ENCODE measurements at regions of chr9 and their contacts with region 1.

Region 1: DNA sequence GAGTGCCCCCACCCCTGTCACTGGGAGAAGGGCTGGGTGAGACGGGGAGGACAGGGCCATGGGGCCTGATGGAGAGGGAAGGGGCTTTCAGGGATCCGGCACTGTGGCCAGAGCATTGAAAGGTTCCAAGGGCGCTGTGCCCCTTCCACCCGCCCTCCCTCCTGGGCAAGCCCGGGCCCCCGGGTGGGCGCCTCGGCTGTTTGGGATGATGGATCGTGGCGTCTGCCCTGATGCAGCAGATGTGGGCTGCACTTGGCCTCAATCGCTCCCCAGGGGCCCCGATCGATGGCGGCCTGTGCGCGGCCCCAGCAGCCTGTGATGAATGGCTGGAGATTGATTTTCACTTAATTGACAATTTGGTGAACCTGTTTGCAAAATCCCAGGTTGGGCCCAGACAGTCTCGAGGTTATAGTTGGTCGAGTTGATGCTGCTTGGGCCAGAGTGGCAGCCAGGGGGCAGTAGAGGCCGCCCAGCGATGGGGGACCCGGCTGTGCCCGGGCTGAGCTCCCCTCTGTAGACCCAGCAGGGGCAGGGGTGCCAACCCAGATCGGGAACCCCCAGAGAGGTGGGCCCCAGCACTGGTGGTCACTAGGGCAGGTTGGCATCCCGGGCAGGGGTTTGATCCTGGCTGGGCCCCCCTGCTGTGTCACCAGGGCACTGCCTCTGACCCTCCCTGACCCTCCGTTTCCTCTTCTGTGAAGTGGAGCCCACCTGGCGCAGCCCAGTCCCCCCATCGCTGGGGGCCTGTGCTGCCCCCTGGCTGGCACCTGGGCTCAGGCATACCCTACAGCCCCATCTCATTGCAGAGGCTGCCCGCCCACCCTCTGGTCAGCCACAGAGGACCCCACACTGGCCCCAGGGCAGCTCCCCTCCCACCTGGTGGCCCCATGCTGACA is 34.7 kb downstream of the LHX3 start:
- DNase-seq: peak; percentile 89
- H3K4me3 ChIP-seq: peak overlapping the region in 1 of 2 experiments; percentile 48; a peak in 1 of 4 replicates
- H3K27ac ChIP-seq: no peak overlapping the region
- H3K4me1 ChIP-seq: no peaks in the 10 kb centered on the region
- H3K27me3 ChIP-seq: peaks cover 43% of the 10 kb centered on the region; the same call in 1 of the 2 replicates
- CTCF ChIP-seq: peak; percentile 77
- EP300 ChIP-seq: no peak
- RAD21 ChIP-seq: peak; percentile 74

Region 2: DNA sequence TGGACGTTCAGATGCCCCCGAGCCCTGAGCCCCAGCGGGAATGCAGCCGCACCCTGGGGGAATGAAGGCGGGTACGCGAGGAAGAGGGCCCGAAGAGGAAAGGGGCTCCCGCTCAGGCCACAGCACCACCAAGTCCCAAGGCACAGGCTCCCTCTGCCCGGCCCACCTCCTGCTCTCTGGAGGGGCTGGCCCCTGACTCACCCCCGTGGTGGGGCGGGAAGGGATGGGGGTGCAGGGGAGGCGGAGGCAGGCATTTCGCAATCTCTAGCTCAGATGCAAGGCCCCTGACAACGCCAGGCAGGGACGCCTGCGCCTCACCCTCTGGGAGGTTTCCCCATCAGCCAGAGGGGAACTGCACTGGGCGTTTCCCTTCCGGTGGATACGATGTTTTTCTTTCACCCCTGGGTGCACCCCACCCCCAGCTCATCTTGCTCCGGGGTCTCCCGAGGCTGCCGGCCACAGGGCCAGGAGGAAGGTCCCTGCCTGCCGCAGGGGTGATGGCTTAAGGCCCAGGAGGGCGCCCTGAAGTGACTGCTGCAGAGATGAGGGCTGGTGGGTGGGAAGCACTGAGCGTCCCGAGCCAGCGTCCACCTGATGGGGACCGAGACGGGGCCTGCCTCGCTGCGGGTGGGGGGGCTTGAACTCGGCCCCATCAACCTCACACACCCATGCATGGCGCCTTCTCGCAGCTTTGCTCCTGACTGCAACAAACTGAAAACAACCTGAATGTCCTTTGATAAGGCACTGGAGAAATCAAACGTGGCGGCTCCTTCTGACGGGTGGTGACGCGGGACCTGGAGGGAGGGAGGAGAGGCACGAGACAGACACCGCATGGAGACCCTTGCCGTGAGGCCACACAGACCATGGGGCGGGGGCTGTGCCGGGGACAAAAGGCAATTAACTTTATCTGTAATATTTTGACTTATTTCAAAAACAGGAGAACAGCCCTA is 124.0 kb before region 1 on chr9:
- CTCF ChIA-PET with region 1: no interaction called
- POLR2A ChIA-PET with region 1: no interaction called
- DNase-seq: no peak
- H3K4me3 ChIP-seq: no peak overlapping the region
- H3K27ac ChIP-seq: no peak overlapping the region
- H3K4me1 ChIP-seq: no peaks in the 10 kb centered on the region; a peak in 1 of 4 replicates
- H3K27me3 ChIP-seq: no peaks in the 10 kb centered on the region
- CTCF ChIP-seq: no peak
- EP300 ChIP-seq: no peak
- RAD21 ChIP-seq: no peak

Region 3: GRCh38 chr9:136185596-136186366 is 15.5 kb after region 1 on chr9:
- CTCF ChIA-PET with region 1: interaction called, 69 read pairs
- POLR2A ChIA-PET with region 1: no interaction called
- DNase-seq: no peak
- H3K4me3 ChIP-seq: no peak overlapping the region
- H3K27ac ChIP-seq: no peak overlapping the region
- H3K4me1 ChIP-seq: no peaks in the 10 kb centered on the region
- H3K27me3 ChIP-seq: peaks cover 94% of the 10 kb centered on the region
- CTCF ChIP-seq: no peak
- EP300 ChIP-seq: no peak
- RAD21 ChIP-seq: no peak

Region 4: DNA sequence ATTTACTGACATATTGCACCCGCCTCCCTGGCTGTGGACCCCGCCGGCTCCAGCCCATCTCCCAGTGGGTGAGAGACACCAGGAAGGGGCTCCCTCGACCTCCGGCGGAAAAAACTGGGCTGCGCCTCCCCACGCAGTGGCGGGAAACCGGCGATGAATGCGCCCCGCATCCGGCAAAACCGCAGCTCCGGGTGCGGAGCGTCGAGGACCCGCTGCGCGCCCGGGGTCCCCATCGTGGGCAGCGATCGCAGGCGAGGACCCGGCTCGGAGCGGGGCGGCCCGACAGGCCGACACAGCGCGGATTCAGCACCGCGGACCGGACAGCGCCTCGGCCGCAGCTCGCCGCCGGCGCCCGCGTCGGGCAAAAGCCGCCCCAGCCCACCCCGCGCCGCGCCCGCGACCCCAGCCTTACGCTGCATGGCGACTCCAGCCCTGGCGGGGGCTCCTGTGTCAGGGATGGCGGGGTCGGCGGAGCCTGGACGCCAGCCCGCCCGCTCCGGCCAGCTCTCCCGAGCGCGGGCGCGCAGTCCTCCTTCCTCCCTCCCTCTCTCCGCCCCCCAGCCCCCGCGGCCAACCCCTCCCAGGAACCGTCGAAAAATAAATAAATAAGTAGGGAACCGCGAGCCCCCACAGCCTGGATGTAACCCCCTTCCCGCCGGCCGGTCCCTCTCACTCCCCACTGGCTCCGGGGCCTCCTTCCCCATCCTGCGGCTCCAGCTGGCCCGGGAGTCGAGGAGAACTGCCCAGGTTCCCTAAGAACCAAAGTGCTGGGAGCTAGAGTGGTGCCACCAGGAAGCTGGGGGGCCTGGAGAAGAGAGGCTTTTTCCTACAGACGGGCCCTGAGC is 31.6 kb after region 1 on chr9:
- CTCF ChIA-PET with region 1: interaction called, 16 read pairs
- POLR2A ChIA-PET with region 1: no interaction called
- DNase-seq: peak; percentile 63
- H3K4me3 ChIP-seq: no peak overlapping the region
- H3K27ac ChIP-seq: no peak overlapping the region
- H3K4me1 ChIP-seq: peaks cover 0 to 5% of the 10 kb centered on the region in 2 experiments; a peak in 1 of 4 replicates
- H3K27me3 ChIP-seq: peaks cover 66% of the 10 kb centered on the region
- CTCF ChIP-seq: no peak
- EP300 ChIP-seq: no peak
- RAD21 ChIP-seq: no peak

Region 5: DNA sequence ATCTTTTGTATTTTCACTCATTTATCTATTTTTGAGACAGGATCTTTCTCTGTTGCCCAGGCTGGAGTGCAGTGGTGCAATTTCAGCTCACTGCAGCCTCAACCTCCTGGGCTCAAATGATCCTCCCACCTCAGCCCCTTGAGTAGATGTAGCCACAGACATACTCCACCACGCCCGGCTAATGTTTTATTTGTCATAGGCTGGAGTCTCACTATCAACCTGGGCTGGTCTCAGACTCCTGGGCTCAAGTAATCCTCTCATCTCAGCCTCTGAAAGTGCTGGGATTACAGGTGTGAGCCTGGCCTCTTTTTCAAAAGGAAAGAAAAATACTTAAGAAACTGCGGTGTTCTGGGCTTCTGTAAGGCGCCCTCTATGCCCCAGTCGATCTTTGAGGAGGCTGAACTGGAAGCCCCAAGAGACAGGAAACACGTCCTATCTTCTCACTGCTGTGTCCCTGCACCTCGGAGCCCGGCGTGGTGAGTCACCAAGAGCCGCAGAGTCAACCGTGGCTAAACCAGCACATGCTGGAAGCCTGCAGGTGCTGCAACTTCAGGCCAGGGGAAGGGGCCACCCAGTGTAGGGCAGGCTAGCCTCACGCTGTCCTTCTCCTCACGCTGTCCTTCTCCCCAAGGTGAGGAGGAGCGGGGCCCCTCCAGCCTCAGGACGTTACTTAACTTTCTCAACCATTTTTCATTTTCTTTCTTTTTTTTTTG is 49.9 kb after region 1 on chr9:
- CTCF ChIA-PET with region 1: interaction called, 15 read pairs
- POLR2A ChIA-PET with region 1: no interaction called
- DNase-seq: no peak
- H3K4me3 ChIP-seq: no peak overlapping the region
- H3K27ac ChIP-seq: no peak overlapping the region
- H3K4me1 ChIP-seq: no peaks in the 10 kb centered on the region
- H3K27me3 ChIP-seq: no peaks in the 10 kb centered on the region
- CTCF ChIP-seq: no peak
- EP300 ChIP-seq: no peak
- RAD21 ChIP-seq: no peak

Region 6: DNA sequence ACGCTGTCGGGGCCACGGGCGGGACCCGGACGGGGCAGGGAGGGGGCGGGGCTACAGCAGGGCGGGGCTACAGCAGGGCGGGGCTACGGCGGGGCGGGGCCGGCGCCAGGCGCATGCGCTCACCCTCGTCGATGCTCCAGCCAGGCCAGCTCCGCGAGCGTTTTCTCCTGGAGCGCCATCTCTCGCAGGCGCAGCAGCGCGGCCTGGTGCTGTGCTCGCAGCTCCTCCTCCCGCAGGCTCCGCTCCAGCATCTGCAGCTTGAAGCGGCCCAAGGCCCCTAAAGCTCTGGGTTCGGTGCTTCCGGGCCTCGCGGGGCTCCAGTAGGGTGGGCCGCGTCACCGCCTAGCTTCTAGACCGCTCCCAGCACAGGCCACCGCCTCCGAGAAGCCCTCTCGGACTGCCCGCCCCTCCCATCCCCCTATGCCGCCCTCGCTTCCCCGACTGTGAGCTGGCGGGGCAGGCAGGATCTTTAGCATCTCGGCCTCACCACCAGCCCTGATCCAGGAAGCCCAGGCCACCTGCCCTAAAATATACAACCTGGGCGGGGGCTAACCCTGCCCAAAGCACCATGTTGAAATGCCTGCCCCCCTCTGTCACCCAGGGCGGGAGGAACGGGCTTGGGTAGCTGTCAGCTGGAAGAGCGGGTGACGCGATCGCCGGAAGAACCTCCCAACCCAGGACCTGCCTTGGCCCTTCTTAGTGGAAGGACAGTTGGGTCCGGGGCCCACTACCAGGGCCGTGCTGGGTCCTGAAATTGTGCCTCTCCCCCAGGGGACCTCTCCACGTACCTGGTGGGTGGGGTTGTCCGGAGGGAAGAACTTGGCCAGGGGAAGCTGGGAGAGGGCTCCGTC is 97.2 kb after region 1 on chr9:
- CTCF ChIA-PET with region 1: interaction called, 15 read pairs
- POLR2A ChIA-PET with region 1: interaction called, 3 read pairs
- DNase-seq: peak; percentile 100
- H3K4me3 ChIP-seq: peak overlapping the region; percentile 50 to 52
- H3K27ac ChIP-seq: peak overlapping the region in 1 of 2 experiments; percentile 76; a peak in 2 of 4 replicates
- H3K4me1 ChIP-seq: peaks cover 0 to 15% of the 10 kb centered on the region in 2 experiments; a peak in 1 of 4 replicates
- H3K27me3 ChIP-seq: peaks cover 5% of the 10 kb centered on the region; the same call in 1 of the 2 replicates
- CTCF ChIP-seq: peak; percentile 28; the same call in 1 of the 2 replicates
- EP300 ChIP-seq: no peak
- RAD21 ChIP-seq: peak; percentile 49

Region 7: DNA sequence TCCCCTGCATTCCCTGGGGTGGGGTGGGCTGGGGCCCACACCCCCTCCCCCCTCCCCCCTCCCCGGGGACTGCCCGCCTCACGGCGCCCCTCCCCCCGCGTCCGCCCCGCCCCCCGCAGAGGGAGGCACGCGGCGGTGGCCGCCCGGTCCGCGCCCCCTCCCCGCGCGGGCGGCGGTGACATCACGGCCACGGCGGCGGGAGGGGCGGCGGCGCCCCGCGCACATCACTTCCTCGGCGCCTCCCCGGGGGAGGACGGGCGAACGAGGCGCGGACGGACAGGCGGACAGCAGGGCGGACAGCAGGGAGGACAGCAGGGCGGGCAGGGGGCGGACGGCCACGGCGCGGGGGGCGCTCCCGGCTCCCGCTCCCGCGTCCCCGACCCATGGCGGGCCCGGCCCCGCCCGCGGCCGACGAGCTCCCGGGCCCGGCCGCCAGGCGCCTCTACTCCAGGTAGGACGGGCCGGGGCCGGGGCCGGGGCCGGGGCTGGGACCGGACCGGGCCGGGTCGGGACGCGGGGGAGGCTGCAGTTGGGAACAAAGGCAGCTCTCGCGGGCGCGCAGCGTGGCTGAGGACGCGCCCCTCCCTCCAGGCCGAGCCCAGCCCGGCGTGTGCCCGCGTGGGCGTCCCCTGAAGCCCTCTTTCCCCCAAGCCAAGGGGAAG is 157.2 kb after region 1 on chr9 and contains the start of gene GPSM1:
- CTCF ChIA-PET with region 1: no interaction called
- POLR2A ChIA-PET with region 1: no interaction called
- DNase-seq: peak; percentile 94
- H3K4me3 ChIP-seq: peak within 1 kb of the TSS; percentile 82 to 84
- H3K27ac ChIP-seq: peak within 1 kb of the TSS; percentile 87 to 98
- H3K4me1 ChIP-seq: peaks cover 24 to 50% of the 10 kb centered on the region in 2 experiments
- H3K27me3 ChIP-seq: no peaks in the 10 kb centered on the region
- CTCF ChIP-seq: no peak
- EP300 ChIP-seq: no peak; a peak in 1 of 4 replicates
- RAD21 ChIP-seq: no peak
- polyA plus RNA-seq, gene GPSM1: 22.8 and 26.7 TPM in 2 replicates